ENCODE measurements at regions of chr5 and their contacts with region 1.

Region 1: DNA sequence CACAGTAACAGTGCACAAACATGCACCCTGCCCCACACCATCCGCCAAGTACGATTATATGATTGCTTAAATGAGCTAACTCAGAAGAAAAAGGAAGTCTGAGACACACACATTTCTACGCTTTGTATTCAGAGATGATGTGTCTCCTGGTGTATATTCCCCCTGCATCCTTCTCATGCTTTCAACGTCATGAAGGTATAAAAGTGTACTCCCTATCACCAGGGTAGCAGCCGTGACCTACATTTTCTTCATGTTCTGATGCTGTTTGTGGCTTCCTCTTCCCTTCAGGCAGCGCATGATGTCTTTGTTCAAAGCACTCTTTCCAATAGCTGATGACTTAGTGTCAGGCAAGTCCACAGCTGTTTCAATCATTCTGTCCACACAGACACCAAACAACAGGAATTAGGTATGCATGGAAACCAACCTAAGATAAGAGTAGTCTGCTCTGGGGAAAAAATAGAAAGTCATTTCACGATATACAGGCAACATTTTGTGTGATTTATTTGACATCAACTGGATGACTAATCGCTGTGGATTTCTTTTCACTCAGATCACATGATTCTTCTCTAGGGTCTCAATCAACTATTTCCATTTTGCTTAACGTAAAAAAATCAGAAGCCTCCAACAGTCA is 269.4 kb upstream of the PTGER4 start:
- DNase-seq: peak; percentile 52 to 95 (median 90)
- H3K4me3 ChIP-seq: peak overlapping the region; percentile 52
- H3K4me3 Mint-ChIP-seq: peak overlapping the region; percentile 35 to 85 (median 65)
- H3K27ac ChIP-seq: peak overlapping the region; percentile 95
- H3K27ac Mint-ChIP-seq: peak overlapping the region; percentile 87 to 100 (median 99)
- H3K4me1 ChIP-seq: peaks cover 61% of the 10 kb centered on the region
- H3K4me1 Mint-ChIP-seq: peaks cover 62 to 66% (median 65%) of the 10 kb centered on the region in 3 donors
- H3K27me3 ChIP-seq: no peaks in the 10 kb centered on the region
- H3K27me3 Mint-ChIP-seq: no peaks in the 10 kb centered on the region

Region 2: DNA sequence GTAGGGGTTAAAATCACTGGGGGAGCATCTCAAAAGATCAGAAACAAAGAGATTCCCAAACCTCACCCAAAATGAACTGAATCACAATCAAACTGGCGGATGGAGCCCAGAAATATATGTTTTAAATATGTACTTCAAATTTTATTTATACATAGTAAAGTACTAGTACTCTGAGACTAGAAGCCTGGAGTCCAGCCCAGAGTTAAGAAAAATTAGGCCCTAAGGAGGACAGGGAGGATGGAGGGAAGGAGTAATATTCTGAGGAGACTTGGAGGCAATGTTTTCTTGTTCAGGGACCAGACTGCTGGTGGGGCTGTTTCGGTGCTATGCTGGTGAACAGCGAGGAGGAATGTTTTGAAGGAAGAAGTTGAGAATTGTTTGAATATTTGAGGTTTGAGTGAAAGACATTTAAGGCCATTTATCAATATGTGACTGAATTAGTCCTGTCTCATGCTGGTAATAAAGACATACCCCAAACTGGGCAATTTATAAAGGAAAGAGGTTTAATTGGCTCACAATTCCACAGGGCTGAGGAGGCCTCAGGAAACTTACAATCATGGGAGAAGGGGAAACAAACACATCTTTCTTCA is 433.2 kb before region 1 on chr5:
- CTCF ChIA-PET with region 1: no interaction called
- POLR2A ChIA-PET with region 1: no interaction called
- DNase-seq: no peak
- H3K4me3 ChIP-seq: no peak overlapping the region
- H3K4me3 Mint-ChIP-seq: no peak overlapping the region
- H3K27ac ChIP-seq: no peak overlapping the region
- H3K27ac Mint-ChIP-seq: no peak overlapping the region
- H3K4me1 ChIP-seq: no peaks in the 10 kb centered on the region
- H3K4me1 Mint-ChIP-seq: no peaks in the 10 kb centered on the region
- H3K27me3 ChIP-seq: no peaks in the 10 kb centered on the region
- H3K27me3 Mint-ChIP-seq: peaks cover 0 to 3% of the 10 kb centered on the region in 2 donors

Region 3: GRCh38 chr5:40390281-40391149 is 19.8 kb before region 1 on chr5:
- CTCF ChIA-PET with region 1: interaction called, 15 read pairs
- POLR2A ChIA-PET with region 1: interaction called, 6 read pairs
- DNase-seq: peak in 1 of 5 donors; percentile 48
- H3K4me3 ChIP-seq: no peak overlapping the region
- H3K4me3 Mint-ChIP-seq: peak overlapping the region in 4 of 7 donors; percentile 17 to 49 (median 32)
- H3K27ac ChIP-seq: no peak overlapping the region
- H3K27ac Mint-ChIP-seq: peak overlapping the region; percentile 22 to 93 (median 78)
- H3K4me1 ChIP-seq: peaks cover 35% of the 10 kb centered on the region
- H3K4me1 Mint-ChIP-seq: peaks cover 56 to 70% (median 66%) of the 10 kb centered on the region in 3 donors
- H3K27me3 ChIP-seq: no peaks in the 10 kb centered on the region
- H3K27me3 Mint-ChIP-seq: no peaks in the 10 kb centered on the region

Region 4: DNA sequence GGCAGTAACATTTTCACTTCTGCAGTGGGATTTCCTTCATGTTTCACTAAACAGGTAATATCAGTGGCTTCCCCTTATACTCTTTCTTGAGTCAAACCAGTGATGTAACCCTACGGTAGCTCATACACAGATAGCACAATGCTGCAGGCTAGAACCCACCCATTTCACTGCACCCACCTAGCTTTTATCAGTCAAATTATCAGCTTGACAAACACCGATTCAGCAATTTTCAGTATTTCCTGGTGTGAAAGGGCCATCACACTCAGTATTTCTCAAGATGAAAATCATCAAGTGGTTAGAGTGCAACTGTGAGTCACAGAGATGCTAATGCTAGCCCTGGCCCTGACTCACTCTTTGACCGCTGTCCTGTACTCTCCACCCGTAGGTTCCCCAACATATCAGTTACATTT is 27.1 kb after region 1 on chr5:
- CTCF ChIA-PET with region 1: interaction called, 32 read pairs
- POLR2A ChIA-PET with region 1: interaction called, 17 read pairs
- DNase-seq: peak in 4 of 5 donors; percentile 11 to 59 (median 33)
- H3K4me3 ChIP-seq: no peak overlapping the region
- H3K4me3 Mint-ChIP-seq: peak overlapping the region in 6 of 7 donors; percentile 6 to 64 (median 46)
- H3K27ac ChIP-seq: peak overlapping the region; percentile 43
- H3K27ac Mint-ChIP-seq: peak overlapping the region; percentile 83 to 99 (median 94)
- H3K4me1 ChIP-seq: peaks cover 45% of the 10 kb centered on the region
- H3K4me1 Mint-ChIP-seq: peaks cover 64 to 75% (median 71%) of the 10 kb centered on the region in 3 donors
- H3K27me3 ChIP-seq: no peaks in the 10 kb centered on the region
- H3K27me3 Mint-ChIP-seq: no peaks in the 10 kb centered on the region

Region 5: GRCh38 chr5:40679155-40679913 is 269.0 kb after region 1 on chr5:
- CTCF ChIA-PET with region 1: interaction called, 3 read pairs
- POLR2A ChIA-PET with region 1: interaction called, 15 read pairs
- DNase-seq: peak; percentile 88 to 93 (median 89)
- H3K4me3 ChIP-seq: peak overlapping the region; percentile 96
- H3K4me3 Mint-ChIP-seq: peak overlapping the region; percentile 91 to 100 (median 99)
- H3K27ac ChIP-seq: peak overlapping the region; percentile 77
- H3K27ac Mint-ChIP-seq: peak overlapping the region; percentile 95 to 98 (median 98)
- H3K4me1 ChIP-seq: peaks cover 46% of the 10 kb centered on the region
- H3K4me1 Mint-ChIP-seq: peaks cover 52 to 60% (median 60%) of the 10 kb centered on the region in 3 donors
- H3K27me3 ChIP-seq: no peaks in the 10 kb centered on the region
- H3K27me3 Mint-ChIP-seq: peaks cover 0 to 3% of the 10 kb centered on the region in 2 donors

Measured in CD8-positive, alpha-beta memory T cell (primary cell).